ENCODE measurements at regions of chr17 and their contacts with region 1.

Region 1: GRCh38 chr17:17859909-17860765 is 23.4 kb upstream of the SREBF1 start:
- DNase-seq: peak; percentile 91
- H3K4me3 Mint-ChIP-seq: no peak overlapping the region
- H3K27ac Mint-ChIP-seq: no peak overlapping the region
- H3K4me1 Mint-ChIP-seq: peaks cover 21% of the 10 kb centered on the region
- H3K27me3 Mint-ChIP-seq: no peaks in the 10 kb centered on the region

Region 2: GRCh38 chr17:17812211-17813057 is 47.7 kb before region 1 on chr17:
- intact Hi-C with region 1: loop called (anchors 1 kb)
- DNase-seq: peak; percentile 90
- H3K4me3 Mint-ChIP-seq: no peak overlapping the region
- H3K27ac Mint-ChIP-seq: no peak overlapping the region
- H3K4me1 Mint-ChIP-seq: peaks cover 8% of the 10 kb centered on the region
- H3K27me3 Mint-ChIP-seq: no peaks in the 10 kb centered on the region